PC-9 (cell line): ENCODE measurements at regions of chr14 and their contacts with region 1.

Region 1: GRCh38 chr14:22265319-22266137 is 323.5 kb downstream of the DAD1 start:
- DNase-seq: peak; percentile 14 to 59
- H3K4me3 ChIP-seq: peak overlapping the region; percentile 18; the same call in 1 of the 2 replicates
- H3K27ac ChIP-seq: peak overlapping the region; percentile 69
- H3K4me1 ChIP-seq: peaks cover 72% of the 10 kb centered on the region
- H3K27me3 ChIP-seq: no peaks in the 10 kb centered on the region
- CTCF ChIP-seq: peak; percentile 44; the same call in 1 of the 2 replicates

Region 2: DNA sequence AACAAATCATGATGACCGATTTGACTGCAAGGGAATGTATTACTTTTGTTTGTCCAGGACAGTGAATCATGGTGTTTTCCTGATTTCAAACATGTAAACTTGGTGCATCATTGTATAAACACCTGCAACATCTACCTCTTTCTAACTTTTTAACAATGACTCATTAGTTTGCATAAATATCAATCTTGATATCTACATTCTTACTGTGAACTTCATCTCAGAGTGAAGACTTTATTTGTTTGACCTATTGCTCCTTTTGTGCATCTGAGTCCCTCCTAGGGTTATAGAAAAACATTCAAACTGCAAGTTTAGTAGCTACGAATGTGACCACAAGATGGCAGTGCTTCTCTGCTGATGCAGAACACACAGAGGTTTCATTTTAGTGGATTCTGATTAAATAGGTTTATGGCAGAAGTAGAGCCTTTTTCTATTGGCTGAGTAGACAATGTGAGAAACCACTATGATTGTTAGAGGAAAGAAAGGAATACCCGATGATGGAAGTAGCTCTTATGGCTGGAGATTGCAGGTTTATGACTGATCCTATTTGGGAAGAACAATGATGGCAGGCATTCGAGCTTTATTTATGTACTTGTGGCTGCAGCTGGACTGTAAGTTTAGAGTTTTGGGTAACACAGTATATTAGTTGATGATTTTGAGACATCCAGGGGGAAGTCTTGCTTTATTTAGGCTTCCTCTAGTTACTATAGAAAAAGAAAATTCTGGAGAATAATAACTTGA is 347.7 kb before region 1 on chr14:
- CTCF ChIA-PET with region 1: no interaction called
- POLR2A ChIA-PET with region 1: interaction called, 3 read pairs
- intact Hi-C with region 1: loop called (anchors 10 kb)
- DNase-seq: peak; percentile 37 to 93
- H3K4me3 ChIP-seq: no peak overlapping the region
- H3K27ac ChIP-seq: peak overlapping the region; percentile 58
- H3K4me1 ChIP-seq: peaks cover 47% of the 10 kb centered on the region
- H3K27me3 ChIP-seq: no peaks in the 10 kb centered on the region
- CTCF ChIP-seq: peak; percentile 80

Region 3: DNA sequence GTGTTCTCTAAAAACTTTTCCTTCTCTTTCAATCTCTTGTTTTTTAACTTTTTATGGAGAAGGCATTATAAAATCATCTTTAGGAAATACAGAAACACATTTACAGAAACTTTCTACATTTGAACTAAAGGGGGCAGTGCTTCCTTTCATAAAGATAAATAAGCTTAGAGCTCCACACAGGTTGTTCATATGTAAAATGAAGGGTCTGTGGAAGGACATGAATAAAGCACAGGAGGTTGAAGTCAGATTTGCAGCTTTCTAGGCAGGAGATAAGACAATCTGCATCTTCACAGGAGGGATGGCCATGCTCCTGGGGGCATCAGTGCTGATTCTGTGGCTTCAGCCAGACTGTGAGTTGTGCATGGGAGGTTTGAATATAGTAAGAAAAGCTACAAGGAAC is 102.5 kb before region 1 on chr14:
- CTCF ChIA-PET with region 1: no interaction called
- POLR2A ChIA-PET with region 1: no interaction called
- intact Hi-C with region 1: loop called (anchors 2 kb)
- DNase-seq: no peak
- H3K4me3 ChIP-seq: no peak overlapping the region
- H3K27ac ChIP-seq: no peak overlapping the region
- H3K4me1 ChIP-seq: peaks cover 41% of the 10 kb centered on the region
- H3K27me3 ChIP-seq: no peaks in the 10 kb centered on the region
- CTCF ChIP-seq: peak; percentile 57

Region 4: GRCh38 chr14:22177870-22178269 is 87.7 kb before region 1 on chr14:
- CTCF ChIA-PET with region 1: no interaction called
- POLR2A ChIA-PET with region 1: no interaction called
- intact Hi-C with region 1: no loop called
- DNase-seq: no peak
- H3K4me3 ChIP-seq: no peak overlapping the region
- H3K27ac ChIP-seq: no peak overlapping the region
- H3K4me1 ChIP-seq: no peaks in the 10 kb centered on the region
- H3K27me3 ChIP-seq: no peaks in the 10 kb centered on the region
- CTCF ChIP-seq: no peak

Region 5: DNA sequence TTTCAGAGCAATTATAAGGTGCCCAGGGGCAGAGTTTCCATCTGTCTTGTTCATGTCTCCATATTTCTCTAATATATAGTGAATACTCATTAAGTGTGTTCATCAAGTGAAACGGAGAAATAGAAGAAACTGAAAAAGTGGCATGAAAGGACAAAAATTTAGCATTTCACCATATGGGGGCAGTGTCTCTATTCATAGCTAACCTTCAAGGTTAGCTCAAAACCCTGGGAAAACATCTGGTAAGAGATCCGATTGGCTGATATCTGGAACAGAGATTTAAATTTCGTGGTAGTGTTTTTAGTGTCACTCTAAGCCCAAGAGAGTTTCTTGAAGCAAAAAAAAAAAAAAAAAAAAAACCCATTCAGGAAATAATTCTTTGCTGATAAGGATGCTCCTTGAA is 44.0 kb before region 1 on chr14:
- CTCF ChIA-PET with region 1: interaction called, 15 read pairs
- POLR2A ChIA-PET with region 1: no interaction called
- intact Hi-C with region 1: no loop called
- DNase-seq: no peak
- H3K4me3 ChIP-seq: no peak overlapping the region
- H3K27ac ChIP-seq: no peak overlapping the region
- H3K4me1 ChIP-seq: peaks cover 18% of the 10 kb centered on the region
- H3K27me3 ChIP-seq: no peaks in the 10 kb centered on the region
- CTCF ChIP-seq: peak; percentile 48; the same call in 1 of the 2 replicates

Region 6: DNA sequence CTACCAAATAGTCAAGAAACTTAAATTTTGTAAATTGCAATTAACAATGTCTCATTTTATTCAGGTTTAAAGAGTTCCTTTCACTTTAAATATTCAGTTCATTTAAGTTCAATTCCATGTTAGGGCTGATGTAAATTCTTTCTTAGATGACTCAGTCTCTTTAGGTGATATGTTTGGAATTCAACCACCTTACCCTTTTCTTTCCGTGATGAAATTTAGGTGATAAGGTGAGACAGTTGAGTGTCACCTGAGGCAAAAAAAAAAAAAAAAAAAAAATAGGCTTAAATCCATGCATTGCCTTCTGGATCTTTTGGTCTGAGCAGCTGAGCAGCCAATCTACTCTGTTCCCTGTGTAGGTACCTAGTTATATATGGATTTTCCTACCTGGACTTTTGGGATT is 24.0 kb after region 1 on chr14:
- CTCF ChIA-PET with region 1: interaction called, 4 read pairs
- POLR2A ChIA-PET with region 1: no interaction called
- intact Hi-C with region 1: loop called (anchors 1 kb)
- DNase-seq: peak; percentile 15 to 86
- H3K4me3 ChIP-seq: no peak overlapping the region
- H3K27ac ChIP-seq: peak overlapping the region; percentile 77
- H3K4me1 ChIP-seq: peaks cover 28% of the 10 kb centered on the region
- H3K27me3 ChIP-seq: no peaks in the 10 kb centered on the region
- CTCF ChIP-seq: no peak

Region 7: DNA sequence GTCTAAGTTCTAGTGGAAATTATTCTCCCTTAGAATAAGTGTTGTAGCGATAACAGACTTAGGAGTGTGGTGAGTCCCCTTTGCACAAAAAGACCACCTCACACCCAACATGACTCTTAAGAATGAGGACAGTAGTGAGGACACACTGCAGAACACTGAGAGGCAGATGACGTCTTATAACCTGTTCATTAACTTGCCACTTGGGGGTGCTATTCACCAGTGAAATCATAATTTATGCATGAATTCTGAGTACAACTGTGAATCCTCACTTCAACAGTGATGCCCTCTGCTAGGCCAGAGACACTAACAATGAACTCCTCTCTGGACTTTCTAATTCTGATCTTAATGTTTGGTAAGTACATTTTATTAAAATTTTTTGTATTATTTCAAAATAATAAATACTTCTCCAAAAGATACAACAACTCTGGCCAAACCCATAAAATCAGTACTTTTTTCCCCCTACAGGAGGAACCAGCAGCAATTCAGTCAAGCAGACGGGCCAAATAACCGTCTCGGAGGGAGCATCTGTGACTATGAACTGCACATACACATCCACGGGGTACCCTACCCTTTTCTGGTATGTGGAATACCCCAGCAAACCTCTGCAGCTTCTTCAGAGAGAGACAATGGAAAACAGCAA is 48.8 kb after region 1 on chr14:
- CTCF ChIA-PET with region 1: no interaction called
- POLR2A ChIA-PET with region 1: no interaction called
- intact Hi-C with region 1: loop called (anchors 5 kb)
- DNase-seq: no peak
- H3K4me3 ChIP-seq: no peak overlapping the region
- H3K27ac ChIP-seq: no peak overlapping the region
- H3K4me1 ChIP-seq: no peaks in the 10 kb centered on the region
- H3K27me3 ChIP-seq: no peaks in the 10 kb centered on the region
- CTCF ChIP-seq: peak; percentile 73

Region 8: DNA sequence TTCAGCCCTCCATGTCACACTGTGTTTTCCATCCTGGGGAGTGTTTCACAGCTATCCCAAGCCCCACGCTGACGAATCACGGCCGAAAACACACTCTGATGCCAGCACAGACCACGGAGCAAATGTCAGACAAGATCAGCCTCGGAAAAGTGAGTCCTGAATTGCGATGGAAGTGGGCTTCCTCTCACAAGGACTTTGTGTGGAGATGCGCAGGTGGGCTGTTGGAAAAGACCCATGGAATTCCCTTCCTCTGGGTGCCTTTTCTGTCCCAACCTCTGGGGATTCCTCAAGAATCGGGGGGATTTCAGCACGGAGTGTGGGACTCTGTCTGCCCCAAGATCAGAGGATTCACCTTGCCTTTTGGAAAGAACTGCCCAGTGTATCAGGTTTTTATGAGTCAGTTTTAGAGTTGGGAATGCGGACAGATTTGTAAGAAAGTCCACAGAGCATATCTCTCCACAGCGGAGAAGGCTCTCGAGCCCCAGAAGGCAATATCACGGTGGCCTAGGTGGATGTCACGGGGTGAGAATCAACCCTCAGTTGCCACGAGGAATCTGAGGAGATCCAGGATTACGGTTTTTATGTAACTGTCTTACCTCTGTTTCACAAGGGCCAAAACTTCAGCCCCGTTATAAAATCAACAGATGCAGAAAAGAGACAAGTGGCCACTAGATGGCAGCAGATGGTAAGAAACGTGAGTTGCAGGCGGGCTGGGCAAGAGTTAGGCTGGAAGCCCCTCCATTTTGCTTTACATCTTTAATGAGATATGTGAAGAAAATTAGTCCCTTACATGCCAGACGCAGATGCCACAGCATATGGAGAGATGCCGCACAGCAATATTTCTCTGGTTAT is 121.6 kb after region 1 on chr14:
- CTCF ChIA-PET with region 1: no interaction called
- POLR2A ChIA-PET with region 1: interaction called, 18 read pairs
- intact Hi-C with region 1: no loop called
- DNase-seq: peak in 1 of 2 experiments; percentile 37
- H3K4me3 ChIP-seq: no peak overlapping the region
- H3K27ac ChIP-seq: no peak overlapping the region
- H3K4me1 ChIP-seq: peaks cover 47% of the 10 kb centered on the region
- H3K27me3 ChIP-seq: no peaks in the 10 kb centered on the region
- CTCF ChIP-seq: peak; percentile 81